Kidney (tissue), 22 donors: ENCODE measurements at regions of chr11 and their contacts with region 1.

Region 1: DNA sequence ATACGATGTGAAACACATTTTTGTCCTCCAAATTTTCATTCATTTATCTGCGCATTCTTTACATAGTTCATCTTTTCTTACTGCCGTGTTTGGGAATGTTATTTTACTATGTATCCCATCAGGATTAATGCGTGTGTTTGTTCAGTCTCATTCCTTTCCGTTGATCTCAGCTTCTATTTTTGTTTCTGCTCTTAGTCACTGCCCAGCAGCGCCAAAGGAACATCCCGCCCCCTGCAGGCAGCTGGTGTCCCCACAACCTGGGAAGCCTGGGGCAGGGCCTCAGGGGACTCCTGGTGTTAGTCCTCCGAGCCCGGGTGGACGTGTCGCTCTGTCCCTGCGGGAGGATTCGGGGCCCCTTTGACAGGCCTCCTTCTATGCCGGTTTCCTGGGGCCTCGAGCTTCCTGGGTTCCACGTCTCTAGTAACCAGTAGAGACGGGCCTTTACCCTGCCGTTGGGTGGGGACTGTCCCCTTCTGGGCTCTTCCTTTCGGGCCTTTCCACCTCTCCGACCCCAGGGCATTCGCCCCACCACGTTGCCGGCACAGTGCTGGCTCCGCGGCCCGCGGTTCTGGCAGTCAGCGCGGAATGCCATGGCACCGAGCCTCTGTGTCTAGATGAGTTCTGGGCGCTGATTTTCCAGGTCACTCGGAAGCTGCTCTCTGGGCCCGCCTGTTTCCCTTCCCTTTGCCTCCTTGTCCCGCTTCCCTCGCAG is 39.8 kb downstream of the WEE1 start:
- DNase-seq: peak; percentile 96 to 99 (median 97)
- H3K4me3 ChIP-seq: peak overlapping the region; percentile 71 to 82 (median 76)
- H3K27ac ChIP-seq: peak overlapping the region; percentile 92 to 93
- H3K4me1 ChIP-seq: peaks cover 2 to 8% (median 7%) of the 10 kb centered on the region in 3 donors
- H3K27me3 ChIP-seq: no peaks in the 10 kb centered on the region
- CTCF ChIP-seq: peak; percentile 94

Region 2: DNA sequence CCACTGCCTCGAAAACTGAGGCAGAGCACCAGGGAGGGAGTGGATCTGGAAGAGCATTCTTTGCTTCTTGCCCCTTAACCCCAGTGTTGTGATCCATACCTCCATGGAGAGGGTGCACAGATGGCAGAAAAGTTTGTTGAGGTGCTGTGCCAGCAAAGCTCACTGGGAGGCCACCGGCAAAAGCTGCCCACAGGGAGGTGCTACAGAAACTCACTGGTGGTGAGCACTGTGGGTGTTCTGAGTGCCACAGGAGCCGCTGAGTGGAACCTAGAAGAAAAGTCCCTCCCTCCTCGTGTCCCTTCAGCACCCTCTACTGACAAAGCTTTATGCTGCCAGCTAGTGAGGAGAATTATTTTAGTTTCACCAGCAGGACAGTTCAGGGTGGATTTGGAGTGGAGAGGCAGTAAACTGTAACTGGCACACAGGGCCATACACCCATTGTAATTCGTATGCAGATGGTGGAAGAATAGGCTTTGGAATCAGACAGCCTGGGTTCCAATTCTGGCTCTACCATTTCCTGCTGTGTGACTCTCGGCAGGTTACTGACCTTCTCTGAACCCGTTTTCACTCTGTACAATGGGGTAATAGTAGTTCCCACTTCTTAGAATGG is 135.2 kb after region 1 on chr11:
- intact Hi-C with region 1: loop called (anchors 10 kb)
- DNase-seq: peak in 4 of 5 donors; percentile 52 to 85 (median 80)
- H3K4me3 ChIP-seq: no peak overlapping the region
- H3K27ac ChIP-seq: no peak overlapping the region
- H3K4me1 ChIP-seq: peaks cover 0 to 2% (median 0%) of the 10 kb centered on the region in 3 donors
- H3K27me3 ChIP-seq: no peaks in the 10 kb centered on the region
- CTCF ChIP-seq: peak; percentile 78